Caco-2 (cell line): ENCODE measurements at regions of chr13 and their contacts with region 1.

Region 1: GRCh38 chr13:42490676-42491075 is 83.3 kb upstream of the TNFSF11 start:
- DNase-seq: no peak
- H3K4me3 ChIP-seq: no peak overlapping the region
- H3K4me3 Mint-ChIP-seq: no peak overlapping the region
- H3K27ac Mint-ChIP-seq: no peak overlapping the region
- H3K4me1 ChIP-seq: no peaks in the 10 kb centered on the region
- H3K4me1 Mint-ChIP-seq: no peaks in the 10 kb centered on the region
- H3K27me3 ChIP-seq: no peaks in the 10 kb centered on the region
- H3K27me3 Mint-ChIP-seq: peaks cover 7% of the 10 kb centered on the region
- CTCF ChIP-seq: no peak

Region 2: GRCh38 chr13:42466123-42466522 is 24.6 kb before region 1 on chr13:
- CTCF ChIA-PET with region 1: no interaction called
- POLR2A ChIA-PET with region 1: no interaction called
- intact Hi-C with region 1: loop called (anchors 1 kb)
- DNase-seq: no peak
- H3K4me3 ChIP-seq: no peak overlapping the region
- H3K4me3 Mint-ChIP-seq: no peak overlapping the region
- H3K27ac Mint-ChIP-seq: no peak overlapping the region
- H3K4me1 ChIP-seq: no peaks in the 10 kb centered on the region
- H3K4me1 Mint-ChIP-seq: no peaks in the 10 kb centered on the region
- H3K27me3 ChIP-seq: no peaks in the 10 kb centered on the region
- H3K27me3 Mint-ChIP-seq: peaks cover 11% of the 10 kb centered on the region
- CTCF ChIP-seq: no peak

Region 3: DNA sequence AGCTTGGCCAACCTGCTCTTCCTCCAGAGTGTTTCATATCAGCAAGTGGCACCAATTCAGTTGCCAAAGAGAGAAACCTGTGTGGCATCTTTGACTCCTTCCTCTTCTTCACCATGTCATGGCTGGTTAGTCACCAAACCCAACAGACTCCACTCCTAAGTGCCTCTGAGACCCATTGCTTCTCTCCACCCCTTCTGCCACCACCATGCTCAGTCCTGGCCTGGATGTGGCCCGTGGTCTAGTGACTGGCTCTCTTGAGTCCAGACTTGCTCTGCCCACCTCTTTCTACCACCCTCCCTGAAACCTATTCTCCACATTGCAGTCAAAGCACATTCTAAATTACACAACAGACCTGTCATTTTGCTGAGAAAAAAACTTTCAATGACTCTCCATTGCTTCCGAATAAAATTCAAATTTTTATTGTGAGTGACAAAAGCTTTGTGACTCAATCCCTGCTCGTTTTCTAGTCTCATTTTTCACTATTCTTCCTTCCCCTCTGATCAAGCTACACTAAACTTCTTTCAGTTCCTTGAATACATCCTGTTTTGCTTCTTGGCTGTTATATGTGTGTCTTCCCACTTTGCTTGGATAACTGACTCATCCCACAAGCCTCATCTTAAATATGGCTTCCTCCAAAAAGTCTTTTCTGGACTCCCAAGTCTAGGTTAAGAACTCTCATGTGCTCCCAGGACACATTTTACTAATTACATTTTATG is 71.2 kb after region 1 on chr13:
- CTCF ChIA-PET with region 1: no interaction called
- POLR2A ChIA-PET with region 1: no interaction called
- intact Hi-C with region 1: no loop called
- DNase-seq: no peak
- H3K4me3 ChIP-seq: no peak overlapping the region
- H3K4me3 Mint-ChIP-seq: no peak overlapping the region
- H3K27ac Mint-ChIP-seq: no peak overlapping the region
- H3K4me1 ChIP-seq: no peaks in the 10 kb centered on the region
- H3K4me1 Mint-ChIP-seq: no peaks in the 10 kb centered on the region
- H3K27me3 ChIP-seq: no peaks in the 10 kb centered on the region
- H3K27me3 Mint-ChIP-seq: no peaks in the 10 kb centered on the region
- CTCF ChIP-seq: no peak